HepG2 (cell line): ENCODE measurements at regions of chr1 and their contacts with region 1.

Region 1: GRCh38 chr1:229227298-229227919 is 43.5 kb upstream of the RAB4A start:
- DNase-seq: peak; percentile 63
- ATAC-seq: peak; percentile 51
- H3K4me3 ChIP-seq: no peak overlapping the region
- H3K27ac ChIP-seq: no peak overlapping the region
- H3K4me1 ChIP-seq: peaks cover 92% of the 10 kb centered on the region
- H3K27me3 ChIP-seq: no peaks in the 10 kb centered on the region
- CTCF ChIP-seq: peak; percentile 91
- EP300 ChIP-seq: peak in 1 of 2 experiments; percentile 23; a peak in 1 of 4 replicates
- POLR2A ChIP-seq: no peak
- RAD21 ChIP-seq: peak; percentile 90

Region 2: GRCh38 chr1:228664399-228664914 is 563.0 kb before region 1 on chr1:
- CTCF ChIA-PET with region 1: no interaction called
- POLR2A ChIA-PET with region 1: interaction called, 4 read pairs
- in situ Hi-C with region 1: no loop called
- intact Hi-C with region 1: loop called (anchors 1 kb)
- DNase-seq: peak; percentile 68
- ATAC-seq: peak; percentile 62; the same call in 2 of the 3 replicates
- H3K4me3 ChIP-seq: peak overlapping the region in 2 of 3 experiments; percentile 34 to 40; a peak in 2 of 6 replicates
- H3K27ac ChIP-seq: no peak overlapping the region
- H3K4me1 ChIP-seq: peaks cover 17% of the 10 kb centered on the region
- H3K27me3 ChIP-seq: no peaks in the 10 kb centered on the region
- CTCF ChIP-seq: peak; percentile 85
- EP300 ChIP-seq: no peak
- POLR2A ChIP-seq: no peak
- RAD21 ChIP-seq: peak; percentile 89

Region 3: GRCh38 chr1:228691926-228692325 is 535.5 kb before region 1 on chr1:
- CTCF ChIA-PET with region 1: no interaction called
- POLR2A ChIA-PET with region 1: no interaction called
- in situ Hi-C with region 1: loop called (anchors 10 kb)
- intact Hi-C with region 1: loop called (anchors 2 kb)
- DNase-seq: peak; percentile 72
- ATAC-seq: 0 out of 3 replicates have a peak, but pooled peaks have one; percentile 40
- H3K4me3 ChIP-seq: no peak overlapping the region
- H3K27ac ChIP-seq: no peak overlapping the region
- H3K4me1 ChIP-seq: peaks cover 17% of the 10 kb centered on the region; the same call in 1 of the 2 replicates
- H3K27me3 ChIP-seq: no peaks in the 10 kb centered on the region; a peak in 1 of 5 replicates
- CTCF ChIP-seq: peak; percentile 60
- EP300 ChIP-seq: no peak
- POLR2A ChIP-seq: no peak
- RAD21 ChIP-seq: peak; percentile 53

Region 4: GRCh38 chr1:228860911-228861831 is 366.2 kb before region 1 on chr1:
- CTCF ChIA-PET with region 1: no interaction called
- POLR2A ChIA-PET with region 1: no interaction called
- in situ Hi-C with region 1: no loop called
- intact Hi-C with region 1: loop called (anchors 10 kb)
- DNase-seq: peak; percentile 97
- ATAC-seq: peak; percentile 90
- H3K4me3 ChIP-seq: peak overlapping the region in 1 of 3 experiments; percentile 8; a peak in 1 of 6 replicates
- H3K27ac ChIP-seq: peak overlapping the region; percentile 69
- H3K4me1 ChIP-seq: peaks cover 99% of the 10 kb centered on the region
- H3K27me3 ChIP-seq: no peaks in the 10 kb centered on the region
- CTCF ChIP-seq: no peak
- EP300 ChIP-seq: peak; percentile 50 to 89; a peak in 3 of 4 replicates
- POLR2A ChIP-seq: no peak
- RAD21 ChIP-seq: no peak; the same call in 1 of the 2 replicates

Region 5: DNA sequence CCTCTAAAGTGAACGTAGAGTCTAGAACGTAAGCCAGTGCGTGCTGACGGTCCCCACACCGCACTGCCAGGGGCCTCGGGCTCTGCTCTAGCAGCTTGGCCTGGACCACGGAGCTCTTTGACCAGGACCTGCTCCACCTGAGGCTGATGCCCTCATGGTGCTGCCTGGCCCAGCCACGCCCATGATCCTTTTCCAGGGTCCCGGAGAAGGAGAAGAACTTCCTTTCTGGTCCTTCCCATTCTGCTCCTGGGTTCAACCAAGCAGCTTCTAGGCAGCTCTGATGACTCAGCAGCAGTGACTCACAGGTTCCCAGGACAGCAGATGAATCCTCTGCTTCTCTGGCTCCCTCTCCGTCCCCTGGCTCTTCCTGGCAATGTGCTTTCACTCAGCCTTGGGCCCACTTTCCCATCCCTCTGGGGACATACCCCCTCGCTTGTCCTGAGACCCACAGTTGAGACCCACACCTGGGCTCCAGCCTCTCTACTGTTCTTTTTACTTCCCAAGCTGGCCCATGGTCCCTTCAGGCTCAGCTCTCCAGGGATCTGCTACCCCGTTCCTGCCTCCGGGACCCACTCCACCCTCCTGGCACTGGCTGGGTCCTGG is 202.8 kb before region 1 on chr1:
- CTCF ChIA-PET with region 1: no interaction called
- POLR2A ChIA-PET with region 1: no interaction called
- in situ Hi-C with region 1: no loop called
- intact Hi-C with region 1: loop called (anchors 10 kb)
- DNase-seq: peak; percentile 59
- ATAC-seq: peak; percentile 29; the same call in 1 of the 3 replicates
- H3K4me3 ChIP-seq: no peak overlapping the region
- H3K27ac ChIP-seq: no peak overlapping the region
- H3K4me1 ChIP-seq: peaks cover 86% of the 10 kb centered on the region
- H3K27me3 ChIP-seq: no peaks in the 10 kb centered on the region
- CTCF ChIP-seq: no peak
- EP300 ChIP-seq: no peak
- POLR2A ChIP-seq: no peak
- RAD21 ChIP-seq: no peak

Region 6: GRCh38 chr1:229059671-229060539 is 167.5 kb before region 1 on chr1:
- CTCF ChIA-PET with region 1: no interaction called
- POLR2A ChIA-PET with region 1: no interaction called
- in situ Hi-C with region 1: no loop called
- intact Hi-C with region 1: loop called (anchors 10 kb)
- DNase-seq: no peak
- ATAC-seq: peak; percentile 28
- H3K4me3 ChIP-seq: no peak overlapping the region
- H3K27ac ChIP-seq: peak overlapping the region; percentile 4
- H3K4me1 ChIP-seq: peaks cover 73% of the 10 kb centered on the region
- H3K27me3 ChIP-seq: no peaks in the 10 kb centered on the region
- CTCF ChIP-seq: no peak
- EP300 ChIP-seq: no peak
- POLR2A ChIP-seq: no peak
- RAD21 ChIP-seq: no peak

Region 7: DNA sequence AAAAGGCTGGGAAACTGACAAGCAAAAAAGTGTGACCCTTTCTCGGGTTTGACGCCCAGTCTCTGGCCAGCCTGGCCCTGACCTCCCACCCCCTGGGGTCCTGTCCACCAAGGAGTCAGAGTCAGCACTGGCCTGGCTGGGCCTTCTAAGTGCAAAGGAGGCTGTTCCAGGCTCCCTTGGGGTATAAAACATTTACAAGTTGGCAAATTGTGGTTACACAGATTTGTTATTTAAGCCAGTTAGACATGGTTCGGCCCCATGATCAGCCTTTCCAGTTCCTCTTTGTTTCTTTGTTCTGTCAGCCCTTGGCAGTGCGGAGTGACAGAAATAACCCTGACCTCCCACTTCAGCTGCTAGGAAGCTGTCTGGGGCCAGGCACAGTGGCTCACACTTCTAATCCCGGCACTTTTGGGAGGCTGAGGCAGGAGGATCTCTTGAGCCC is 118.1 kb before region 1 on chr1:
- CTCF ChIA-PET with region 1: no interaction called
- POLR2A ChIA-PET with region 1: no interaction called
- in situ Hi-C with region 1: no loop called
- intact Hi-C with region 1: loop called (anchors 10 kb)
- DNase-seq: no peak
- ATAC-seq: peak; percentile 13; the same call in 2 of the 3 replicates
- H3K4me3 ChIP-seq: no peak overlapping the region
- H3K27ac ChIP-seq: peak overlapping the region; percentile 68
- H3K4me1 ChIP-seq: peaks cover 100% of the 10 kb centered on the region
- H3K27me3 ChIP-seq: no peaks in the 10 kb centered on the region
- CTCF ChIP-seq: no peak
- EP300 ChIP-seq: no peak
- POLR2A ChIP-seq: no peak
- RAD21 ChIP-seq: no peak

Region 8: GRCh38 chr1:229247871-229248270 is 20.5 kb after region 1 on chr1:
- CTCF ChIA-PET with region 1: no interaction called
- POLR2A ChIA-PET with region 1: no interaction called
- in situ Hi-C with region 1: no loop called
- intact Hi-C with region 1: no loop called
- DNase-seq: no peak
- ATAC-seq: no peak
- H3K4me3 ChIP-seq: no peak overlapping the region
- H3K27ac ChIP-seq: no peak overlapping the region
- H3K4me1 ChIP-seq: peaks cover 35% of the 10 kb centered on the region
- H3K27me3 ChIP-seq: peaks cover 0 to 8% of the 10 kb centered on the region in 2 experiments; a peak in 2 of 5 replicates
- CTCF ChIP-seq: no peak
- EP300 ChIP-seq: no peak
- POLR2A ChIP-seq: no peak
- RAD21 ChIP-seq: no peak